Sciatic nerve (tissue), 2 donors: ENCODE measurements at regions of chr6 and their contacts with region 1.

Region 1: GRCh38 chr6:39302669-39303424 is 11.4 kb downstream of the KCNK17 start:
- DNase-seq: peak; percentile 94
- ATAC-seq: peak; percentile 93

Region 2: GRCh38 chr6:39166189-39166911 is 136.5 kb before region 1 on chr6:
- intact Hi-C with region 1: loop called (anchors 2 kb)
- DNase-seq: peak; percentile 94
- ATAC-seq: peak; percentile 92

Region 3: GRCh38 chr6:39389484-39389767 is 86.6 kb after region 1 on chr6:
- intact Hi-C with region 1: no loop called
- DNase-seq: no peak
- ATAC-seq: peak; percentile 65

Region 4: GRCh38 chr6:40042242-40042641 is 739.4 kb after region 1 on chr6:
- intact Hi-C with region 1: no loop called
- DNase-seq: no peak
- ATAC-seq: no peak